ENCODE measurements at regions of chr2 and their contacts with region 1.

Region 1: DNA sequence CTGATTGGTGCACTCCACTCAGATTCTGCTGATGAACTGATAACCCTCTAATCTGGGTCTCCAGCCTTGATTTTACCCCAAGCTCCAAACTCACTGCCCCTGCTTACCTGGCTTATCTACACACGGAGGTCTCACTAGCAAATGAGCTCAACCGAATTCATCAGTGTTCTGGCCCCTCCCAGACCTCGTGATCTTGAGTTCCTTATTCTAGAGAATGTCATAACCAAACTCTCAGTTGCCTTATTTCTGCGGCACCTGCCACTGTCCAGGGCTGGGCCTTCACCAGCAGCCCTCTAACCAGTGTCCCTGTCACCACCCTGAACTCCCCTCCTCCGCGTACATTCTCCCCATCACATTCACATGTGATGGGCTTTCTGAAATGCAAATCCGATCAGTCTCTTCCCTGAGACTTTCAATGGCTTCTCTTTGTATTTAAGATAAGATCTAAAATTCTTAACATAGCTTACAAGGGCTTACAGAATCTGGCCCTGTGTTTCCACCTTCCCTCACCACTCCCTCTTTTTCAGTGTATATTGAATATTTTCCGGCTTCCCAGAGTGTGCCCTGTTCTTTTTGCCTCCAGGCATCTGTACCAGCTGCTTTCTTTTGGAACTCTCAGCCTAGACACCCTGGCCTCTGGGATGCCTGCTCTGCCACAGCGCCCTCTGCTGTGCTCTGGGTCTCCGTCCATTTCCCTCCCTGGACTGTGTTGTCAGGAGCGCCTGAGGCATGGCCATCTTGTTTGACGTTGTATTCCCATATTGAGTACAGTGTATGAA is 31.1 kb downstream of the NAB1 start:
- DNase-seq: peak; percentile 27 to 59 (median 46)
- ATAC-seq: peak; percentile 92
- H3K4me3 ChIP-seq: no peak overlapping the region
- H3K4me3 Mint-ChIP-seq: peak overlapping the region in 2 of 10 donors; percentile 8
- H3K27ac ChIP-seq: no peak overlapping the region
- H3K27ac Mint-ChIP-seq: peak overlapping the region in 7 of 9 donors; percentile 7 to 74 (median 52)
- H3K4me1 ChIP-seq: peaks cover 5 to 10% of the 10 kb centered on the region in 2 donors
- H3K4me1 Mint-ChIP-seq: peaks cover 17 to 49% (median 41%) of the 10 kb centered on the region in 7 donors
- H3K27me3 ChIP-seq: no peaks in the 10 kb centered on the region
- H3K27me3 Mint-ChIP-seq: no peaks in the 10 kb centered on the region

Region 2: DNA sequence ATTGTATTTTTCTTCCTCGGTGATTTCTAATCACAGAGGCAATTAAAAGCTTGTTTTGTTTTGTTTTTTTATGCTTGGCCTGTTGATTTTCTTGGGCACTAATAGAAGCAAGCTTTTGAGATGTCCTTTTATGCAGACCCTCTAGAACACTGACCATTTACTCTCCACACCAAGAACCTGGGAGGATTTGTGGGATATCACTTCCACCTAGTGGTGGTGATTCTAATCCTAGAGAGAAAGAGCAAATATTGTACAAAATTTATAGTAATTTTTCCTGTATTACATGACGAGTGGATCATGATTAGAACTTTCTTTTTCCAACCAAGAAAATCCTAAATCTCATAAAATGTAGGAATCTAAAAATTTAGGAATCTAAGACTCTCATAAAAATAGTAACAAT is 168.9 kb before region 1 on chr2:
- CTCF ChIA-PET with region 1: interaction called, 3 read pairs
- POLR2A ChIA-PET with region 1: no interaction called
- intact Hi-C with region 1: loop called in 1 of 2 experiments (anchors 5 kb)
- DNase-seq: no peak
- ATAC-seq: no peak
- H3K4me3 ChIP-seq: no peak overlapping the region
- H3K4me3 Mint-ChIP-seq: no peak overlapping the region
- H3K27ac ChIP-seq: no peak overlapping the region
- H3K27ac Mint-ChIP-seq: peak overlapping the region in 4 of 9 donors; percentile 1 to 64 (median 43)
- H3K4me1 ChIP-seq: peaks cover 8 to 10% of the 10 kb centered on the region in 2 donors
- H3K4me1 Mint-ChIP-seq: peaks cover 7 to 36% (median 26%) of the 10 kb centered on the region in 7 donors
- H3K27me3 ChIP-seq: no peaks in the 10 kb centered on the region
- H3K27me3 Mint-ChIP-seq: no peaks in the 10 kb centered on the region

Region 3: GRCh38 chr2:190528521-190529001 is 151.4 kb before region 1 on chr2:
- CTCF ChIA-PET with region 1: no interaction called
- POLR2A ChIA-PET with region 1: no interaction called
- intact Hi-C with region 1: loop called in 1 of 2 experiments (anchors 1 kb)
- DNase-seq: no peak
- ATAC-seq: no peak
- H3K4me3 ChIP-seq: no peak overlapping the region
- H3K4me3 Mint-ChIP-seq: no peak overlapping the region
- H3K27ac ChIP-seq: no peak overlapping the region
- H3K27ac Mint-ChIP-seq: peak overlapping the region in 7 of 9 donors; percentile 14 to 83 (median 69)
- H3K4me1 ChIP-seq: peaks cover 15 to 32% of the 10 kb centered on the region in 2 donors
- H3K4me1 Mint-ChIP-seq: peaks cover 35 to 81% (median 79%) of the 10 kb centered on the region in 7 donors
- H3K27me3 ChIP-seq: no peaks in the 10 kb centered on the region
- H3K27me3 Mint-ChIP-seq: no peaks in the 10 kb centered on the region

Region 4: GRCh38 chr2:190636373-190636772 is 43.6 kb before region 1 on chr2:
- CTCF ChIA-PET with region 1: interaction called, 10 read pairs
- POLR2A ChIA-PET with region 1: no interaction called
- intact Hi-C with region 1: loop called in 1 of 2 experiments (anchors 1 kb)
- DNase-seq: no peak
- ATAC-seq: no peak
- H3K4me3 ChIP-seq: no peak overlapping the region
- H3K4me3 Mint-ChIP-seq: no peak overlapping the region
- H3K27ac ChIP-seq: no peak overlapping the region
- H3K27ac Mint-ChIP-seq: no peak overlapping the region
- H3K4me1 ChIP-seq: no peaks in the 10 kb centered on the region
- H3K4me1 Mint-ChIP-seq: peaks cover 0 to 4% (median 0%) of the 10 kb centered on the region in 7 donors
- H3K27me3 ChIP-seq: no peaks in the 10 kb centered on the region
- H3K27me3 Mint-ChIP-seq: peaks cover 0 to 2% (median 0%) of the 10 kb centered on the region in 5 donors

Measured in naive thymus-derived CD4-positive, alpha-beta T cell (primary cell).